Activated B cell treated with CpG ODN at 0.5 μM for 24 hours (primary cell): ENCODE measurements at regions of chr12 and their contacts with region 1.

Region 1: DNA sequence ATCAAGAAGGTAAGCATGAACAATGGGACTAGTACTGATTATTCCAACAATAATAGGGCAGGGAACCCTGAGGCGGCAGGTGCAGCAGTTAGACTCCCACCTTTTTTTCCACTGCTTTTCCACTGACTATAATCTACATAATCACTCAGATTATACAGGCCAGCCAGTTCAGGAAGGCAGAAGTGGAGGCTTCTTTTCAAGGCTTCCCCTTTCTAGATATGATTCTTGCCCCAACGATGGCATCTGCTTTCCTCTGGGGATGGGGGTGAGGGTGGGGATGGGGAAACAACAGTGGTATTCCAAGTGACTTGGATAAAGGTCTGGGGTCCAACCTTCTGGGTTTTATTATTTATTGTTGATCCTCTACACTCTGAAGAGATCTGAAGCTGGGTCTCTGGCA is 331 bp downstream of the NCKAP1L start:
- DNase-seq: no peak
- ATAC-seq: peak; percentile 4
- H3K4me3 Mint-ChIP-seq: peak overlapping the region; percentile 98
- H3K27ac Mint-ChIP-seq: peak overlapping the region; percentile 97
- H3K4me1 Mint-ChIP-seq: peaks cover 49% of the 10 kb centered on the region
- H3K27me3 Mint-ChIP-seq: no peaks in the 10 kb centered on the region
- CTCF ChIP-seq: no peak

Region 2: DNA sequence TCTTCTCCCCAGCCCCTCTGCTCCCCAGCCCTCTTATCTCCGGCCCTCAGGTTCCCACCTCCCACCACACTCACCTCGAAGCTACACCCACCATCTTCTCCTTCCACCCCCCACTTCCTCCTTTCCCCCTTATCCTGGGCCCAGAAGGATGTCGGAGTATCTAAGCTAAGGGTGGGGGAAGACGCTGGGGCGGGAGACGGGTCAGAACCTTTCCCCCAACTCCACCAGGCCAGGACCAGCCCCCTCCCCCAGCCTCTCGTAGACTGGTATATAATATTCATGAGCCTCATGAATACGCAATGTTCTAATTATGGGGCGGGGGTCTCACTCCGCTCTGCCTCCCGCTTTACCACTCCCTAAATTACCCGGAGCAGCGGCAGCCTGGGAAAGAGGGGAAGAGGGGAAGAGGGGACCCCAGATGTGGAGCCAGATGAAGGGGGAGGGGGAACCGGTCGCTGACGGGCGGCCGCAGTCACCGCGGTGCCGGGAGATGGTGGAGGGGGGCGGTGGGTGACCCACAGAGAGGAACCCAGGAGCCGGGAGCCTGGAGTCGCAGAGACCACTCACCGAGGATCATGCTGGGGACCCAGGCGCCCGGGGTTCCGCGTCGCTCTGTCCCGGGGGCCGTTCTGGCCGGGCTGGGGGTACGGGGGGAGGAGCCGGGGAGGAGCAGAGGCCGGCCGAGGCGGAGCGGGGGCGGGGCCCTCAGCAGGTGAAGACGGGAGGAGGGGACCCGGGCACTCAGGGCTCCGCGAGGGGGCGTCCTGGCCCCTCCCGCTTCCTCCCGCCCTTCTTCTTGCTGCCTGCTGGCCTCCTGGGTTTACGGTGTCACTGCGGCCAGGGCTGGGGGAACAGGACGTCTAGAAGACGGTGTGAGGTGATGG is 107.0 kb before region 1 on chr12:
- CTCF ChIA-PET with region 1: no interaction called
- POLR2A ChIA-PET with region 1: no interaction called
- intact Hi-C with region 1: loop called (anchors 2 kb)
- DNase-seq: peak; percentile 74
- ATAC-seq: peak; percentile 96
- H3K4me3 Mint-ChIP-seq: peak overlapping the region; percentile 83
- H3K27ac Mint-ChIP-seq: peak overlapping the region; percentile 41
- H3K4me1 Mint-ChIP-seq: peaks cover 63% of the 10 kb centered on the region
- H3K27me3 Mint-ChIP-seq: no peaks in the 10 kb centered on the region
- CTCF ChIP-seq: no peak

Region 3: DNA sequence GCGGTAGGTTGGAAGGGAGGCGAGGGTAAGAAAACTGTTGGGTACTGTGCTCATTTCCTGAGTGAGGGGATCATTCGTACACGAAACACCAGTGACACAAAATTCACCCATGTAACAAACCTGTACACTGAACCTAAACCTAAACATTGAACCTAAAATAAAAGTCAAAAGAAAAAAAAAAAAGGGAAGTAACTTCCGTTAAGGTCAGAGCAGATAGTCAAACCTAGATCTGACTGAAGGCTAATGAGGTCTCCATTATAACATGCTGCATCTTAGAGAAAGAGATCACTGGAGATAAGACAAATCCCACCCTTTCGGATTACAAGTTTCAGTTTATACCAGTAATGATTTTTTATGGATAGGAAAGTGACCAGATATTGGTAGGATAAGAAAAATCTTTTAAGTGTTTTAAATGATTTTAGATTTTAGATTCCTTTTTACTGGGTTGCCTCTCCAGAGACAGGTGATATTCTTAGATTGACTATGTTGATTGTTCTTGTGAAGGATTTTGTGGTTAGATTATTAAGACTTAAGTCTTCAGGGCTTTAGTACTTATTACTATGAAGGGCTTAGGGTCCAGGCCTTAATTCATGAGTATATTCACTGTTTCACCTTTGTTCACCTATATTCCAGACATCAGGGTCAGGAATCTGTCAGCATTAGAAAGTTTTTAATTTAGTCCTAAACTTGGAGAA is 11.6 kb before region 1 on chr12:
- CTCF ChIA-PET with region 1: no interaction called
- POLR2A ChIA-PET with region 1: interaction called, 3 read pairs
- intact Hi-C with region 1: loop called (anchors 1 kb)
- DNase-seq: no peak
- ATAC-seq: peak; percentile 42
- H3K4me3 Mint-ChIP-seq: no peak overlapping the region
- H3K27ac Mint-ChIP-seq: peak overlapping the region; percentile 13
- H3K4me1 Mint-ChIP-seq: peaks cover 7% of the 10 kb centered on the region
- H3K27me3 Mint-ChIP-seq: no peaks in the 10 kb centered on the region
- CTCF ChIP-seq: no peak

Region 4: GRCh38 chr12:54522243-54522642 is 24.4 kb after region 1 on chr12:
- CTCF ChIA-PET with region 1: interaction called, 8 read pairs
- POLR2A ChIA-PET with region 1: no interaction called
- intact Hi-C with region 1: loop called (anchors 2 kb)
- DNase-seq: no peak
- ATAC-seq: no peak
- H3K4me3 Mint-ChIP-seq: no peak overlapping the region
- H3K27ac Mint-ChIP-seq: no peak overlapping the region
- H3K4me1 Mint-ChIP-seq: no peaks in the 10 kb centered on the region
- H3K27me3 Mint-ChIP-seq: no peaks in the 10 kb centered on the region
- CTCF ChIP-seq: no peak